ENCODE measurements at regions of chr11 and their contacts with region 1.

Region 1: GRCh38 chr11:102488208-102488607 is 35.6 kb upstream of the TMEM123 start:
- DNase-seq: no peak
- H3K4me3 Mint-ChIP-seq: no peak overlapping the region
- H3K27ac Mint-ChIP-seq: no peak overlapping the region
- H3K4me1 Mint-ChIP-seq: peaks cover 23% of the 10 kb centered on the region
- H3K27me3 Mint-ChIP-seq: peaks cover 3% of the 10 kb centered on the region

Region 2: GRCh38 chr11:102476812-102477211 is 11.4 kb before region 1 on chr11:
- CTCF ChIA-PET with region 1: interaction called, 11 read pairs
- DNase-seq: peak; percentile 58
- H3K4me3 Mint-ChIP-seq: peak overlapping the region; percentile 22
- H3K27ac Mint-ChIP-seq: peak overlapping the region; percentile 89
- H3K4me1 Mint-ChIP-seq: peaks cover 64% of the 10 kb centered on the region
- H3K27me3 Mint-ChIP-seq: no peaks in the 10 kb centered on the region